K562 (cell line): ENCODE measurements at regions of chr1 and their contacts with region 1.

Region 1: GRCh38 chr1:42730988-42731387 is 9.0 kb downstream of the CLDN19 start:
- DNase-seq: peak; percentile 47 to 72 (median 52)
- ATAC-seq: peak; percentile 66
- H3K4me3 ChIP-seq: no peak overlapping the region
- H3K27ac ChIP-seq: no peak overlapping the region
- H3K4me1 ChIP-seq: peaks cover 0 to 11% of the 10 kb centered on the region in 2 experiments; a peak in 3 of 5 replicates
- H3K27me3 ChIP-seq: peaks cover 2 to 24% of the 10 kb centered on the region in 2 experiments; a peak in 3 of 5 replicates
- CTCF ChIP-seq: peak; percentile 59 to 69 (median 65); a peak in 5 of 6 replicates
- EP300 ChIP-seq: no peak
- POLR2A ChIP-seq: no peak
- RAD21 ChIP-seq: peak in 1 of 2 experiments; percentile 88; a peak in 2 of 4 replicates

Region 2: DNA sequence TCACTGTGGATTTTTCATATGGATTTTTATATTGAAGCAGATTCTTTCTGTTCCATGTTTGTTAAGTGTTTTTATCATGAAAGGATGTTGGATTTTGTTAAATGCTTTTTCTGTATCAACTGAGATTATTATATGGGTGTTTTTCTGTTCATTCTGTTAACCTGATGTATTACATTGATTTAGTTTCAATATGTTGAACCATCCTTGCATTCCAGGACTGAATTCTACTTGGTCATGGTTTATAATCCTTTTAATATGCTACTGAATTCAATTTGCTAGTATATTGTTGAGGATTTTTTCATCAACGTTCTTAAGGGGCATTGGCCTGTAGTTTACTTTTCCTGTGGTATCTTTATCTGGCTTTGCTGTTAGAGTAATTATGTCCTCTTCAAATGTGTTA is 212.1 kb before region 1 on chr1:
- CTCF ChIA-PET with region 1: no interaction called
- POLR2A ChIA-PET with region 1: no interaction called
- in situ Hi-C with region 1: no loop called
- intact Hi-C with region 1: loop called (anchors 5 kb)
- DNase-seq: no peak
- ATAC-seq: no peak
- H3K4me3 ChIP-seq: no peak overlapping the region
- H3K27ac ChIP-seq: no peak overlapping the region
- H3K4me1 ChIP-seq: no peaks in the 10 kb centered on the region
- H3K27me3 ChIP-seq: no peaks in the 10 kb centered on the region
- CTCF ChIP-seq: no peak
- EP300 ChIP-seq: no peak
- POLR2A ChIP-seq: no peak
- RAD21 ChIP-seq: no peak

Region 3: GRCh38 chr1:42674214-42674613 is 56.8 kb before region 1 on chr1:
- CTCF ChIA-PET with region 1: no interaction called
- POLR2A ChIA-PET with region 1: no interaction called
- in situ Hi-C with region 1: no loop called
- intact Hi-C with region 1: no loop called
- DNase-seq: no peak
- ATAC-seq: no peak
- H3K4me3 ChIP-seq: no peak overlapping the region
- H3K27ac ChIP-seq: no peak overlapping the region
- H3K4me1 ChIP-seq: no peaks in the 10 kb centered on the region
- H3K27me3 ChIP-seq: no peaks in the 10 kb centered on the region
- CTCF ChIP-seq: no peak
- EP300 ChIP-seq: no peak
- POLR2A ChIP-seq: no peak
- RAD21 ChIP-seq: no peak

Region 4: GRCh38 chr1:42774928-42775526 is 44.0 kb after region 1 on chr1:
- CTCF ChIA-PET with region 1: no interaction called
- POLR2A ChIA-PET with region 1: no interaction called
- in situ Hi-C with region 1: no loop called
- intact Hi-C with region 1: no loop called
- DNase-seq: no peak
- ATAC-seq: no peak
- H3K4me3 ChIP-seq: no peak overlapping the region
- H3K27ac ChIP-seq: no peak overlapping the region
- H3K4me1 ChIP-seq: no peaks in the 10 kb centered on the region
- H3K27me3 ChIP-seq: no peaks in the 10 kb centered on the region
- CTCF ChIP-seq: no peak
- EP300 ChIP-seq: no peak
- POLR2A ChIP-seq: no peak
- RAD21 ChIP-seq: no peak

Region 5: GRCh38 chr1:43121256-43121900 is 390.4 kb after region 1 on chr1:
- CTCF ChIA-PET with region 1: no interaction called
- POLR2A ChIA-PET with region 1: no interaction called
- in situ Hi-C with region 1: no loop called
- intact Hi-C with region 1: no loop called
- DNase-seq: no peak
- ATAC-seq: no peak; the same call in 2 of the 3 replicates
- H3K4me3 ChIP-seq: no peak overlapping the region
- H3K27ac ChIP-seq: no peak overlapping the region
- H3K4me1 ChIP-seq: peaks cover 0 to 9% of the 10 kb centered on the region in 2 experiments; a peak in 3 of 5 replicates
- H3K27me3 ChIP-seq: no peaks in the 10 kb centered on the region
- CTCF ChIP-seq: no peak
- EP300 ChIP-seq: no peak
- POLR2A ChIP-seq: no peak
- RAD21 ChIP-seq: no peak